HCT116 (cell line): ENCODE measurements at regions of chr7 and their contacts with region 1.

Region 1: GRCh38 chr7:123154231-123154860 is 45.4 kb downstream of the SLC13A1 start:
- DNase-seq: peak; percentile 90
- ATAC-seq: peak; percentile 99
- H3K4me3 ChIP-seq: no peak overlapping the region
- H3K27ac ChIP-seq: no peak overlapping the region
- H3K4me1 ChIP-seq: no peaks in the 10 kb centered on the region
- H3K27me3 ChIP-seq: no peaks in the 10 kb centered on the region
- CTCF ChIP-seq: peak; percentile 58 to 85 (median 73); a peak in 5 of 6 replicates
- POLR2A ChIP-seq: no peak
- RAD21 ChIP-seq: peak; percentile 86

Region 2: DNA sequence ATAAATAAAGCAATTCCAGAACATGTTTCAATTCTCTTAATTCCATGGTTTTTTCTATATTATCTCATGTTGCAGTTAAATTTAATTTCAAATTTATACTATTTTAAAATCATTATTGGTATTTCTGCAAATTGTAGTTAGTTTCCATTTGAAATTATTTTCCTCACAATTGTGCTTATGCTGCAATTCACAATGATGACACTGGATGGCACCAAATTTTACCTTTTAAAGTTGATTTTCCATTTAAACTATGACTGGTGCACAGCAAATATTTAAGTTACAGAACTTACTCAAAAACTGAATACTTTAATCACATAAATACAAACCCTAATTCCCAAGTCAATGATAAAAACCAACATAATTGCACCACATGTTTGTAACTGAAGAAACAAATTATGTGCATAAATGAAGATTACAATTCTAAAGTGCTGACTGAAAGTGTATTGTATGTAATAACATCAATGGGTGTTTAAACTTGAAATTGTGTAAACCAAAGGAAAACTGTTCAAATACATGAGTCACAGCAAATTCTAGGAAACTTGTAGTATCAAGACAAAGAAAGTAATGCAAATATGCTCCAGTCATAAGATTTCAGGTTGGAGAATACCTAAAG is 935.0 kb before region 1 on chr7:
- CTCF ChIA-PET with region 1: no interaction called
- POLR2A ChIA-PET with region 1: no interaction called
- RAD21 ChIA-PET with region 1: no interaction called
- intact Hi-C with region 1: loop called (anchors 5 kb)
- DNase-seq: peak; percentile 10
- ATAC-seq: no peak
- H3K4me3 ChIP-seq: no peak overlapping the region
- H3K27ac ChIP-seq: no peak overlapping the region
- H3K4me1 ChIP-seq: no peaks in the 10 kb centered on the region
- H3K27me3 ChIP-seq: no peaks in the 10 kb centered on the region
- CTCF ChIP-seq: peak; percentile 56 to 78 (median 72)
- POLR2A ChIP-seq: no peak
- RAD21 ChIP-seq: peak; percentile 82

Region 3: GRCh38 chr7:122803323-122803722 is 351.0 kb before region 1 on chr7:
- CTCF ChIA-PET with region 1: interaction called, 10 read pairs
- POLR2A ChIA-PET with region 1: no interaction called
- RAD21 ChIA-PET with region 1: no interaction called
- intact Hi-C with region 1: loop called (anchors 2 kb)
- DNase-seq: peak; percentile 10
- ATAC-seq: peak; percentile 59
- H3K4me3 ChIP-seq: no peak overlapping the region
- H3K27ac ChIP-seq: no peak overlapping the region
- H3K4me1 ChIP-seq: no peaks in the 10 kb centered on the region; a peak in 1 of 4 replicates
- H3K27me3 ChIP-seq: no peaks in the 10 kb centered on the region
- CTCF ChIP-seq: peak; percentile 42 to 59 (median 47); a peak in 4 of 6 replicates
- POLR2A ChIP-seq: no peak
- RAD21 ChIP-seq: peak; percentile 62

Region 4: DNA sequence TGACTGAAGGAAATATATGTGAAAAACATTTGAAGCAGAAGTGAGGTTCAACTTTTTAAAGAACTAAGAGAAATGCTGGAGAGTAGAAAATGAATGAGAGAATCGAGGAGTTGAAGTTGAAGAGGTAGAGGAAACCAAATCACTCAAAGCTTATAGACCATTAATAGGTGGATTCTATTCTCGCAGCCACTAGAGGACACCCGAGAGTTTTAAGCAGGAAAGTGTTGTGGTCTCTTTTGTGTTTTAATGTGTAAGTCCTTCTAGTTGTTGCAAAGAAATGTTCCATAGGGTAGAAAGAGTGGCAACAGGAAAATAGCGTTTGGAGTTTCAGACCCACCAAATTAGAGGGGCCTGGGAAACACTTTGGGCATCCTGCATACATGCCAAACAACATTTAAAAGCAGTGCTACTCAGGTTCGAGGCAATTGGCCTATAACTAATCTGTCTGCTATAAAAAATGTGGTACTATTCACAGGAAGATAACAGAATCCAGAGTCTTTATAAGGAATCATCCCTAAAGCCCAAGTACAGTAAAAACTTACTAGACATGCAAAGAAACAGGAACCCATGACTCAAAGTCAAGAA is 83.6 kb before region 1 on chr7:
- CTCF ChIA-PET with region 1: interaction called, 4 read pairs
- POLR2A ChIA-PET with region 1: no interaction called
- RAD21 ChIA-PET with region 1: interaction called in 1 of 2 experiments, 3 read pairs
- intact Hi-C with region 1: loop called (anchors 5 kb)
- DNase-seq: peak; percentile 32
- ATAC-seq: peak; percentile 80
- H3K4me3 ChIP-seq: no peak overlapping the region
- H3K27ac ChIP-seq: no peak overlapping the region
- H3K4me1 ChIP-seq: no peaks in the 10 kb centered on the region
- H3K27me3 ChIP-seq: no peaks in the 10 kb centered on the region
- CTCF ChIP-seq: peak; percentile 46 to 75 (median 69); a peak in 5 of 6 replicates
- POLR2A ChIP-seq: no peak
- RAD21 ChIP-seq: peak; percentile 72

Region 5: DNA sequence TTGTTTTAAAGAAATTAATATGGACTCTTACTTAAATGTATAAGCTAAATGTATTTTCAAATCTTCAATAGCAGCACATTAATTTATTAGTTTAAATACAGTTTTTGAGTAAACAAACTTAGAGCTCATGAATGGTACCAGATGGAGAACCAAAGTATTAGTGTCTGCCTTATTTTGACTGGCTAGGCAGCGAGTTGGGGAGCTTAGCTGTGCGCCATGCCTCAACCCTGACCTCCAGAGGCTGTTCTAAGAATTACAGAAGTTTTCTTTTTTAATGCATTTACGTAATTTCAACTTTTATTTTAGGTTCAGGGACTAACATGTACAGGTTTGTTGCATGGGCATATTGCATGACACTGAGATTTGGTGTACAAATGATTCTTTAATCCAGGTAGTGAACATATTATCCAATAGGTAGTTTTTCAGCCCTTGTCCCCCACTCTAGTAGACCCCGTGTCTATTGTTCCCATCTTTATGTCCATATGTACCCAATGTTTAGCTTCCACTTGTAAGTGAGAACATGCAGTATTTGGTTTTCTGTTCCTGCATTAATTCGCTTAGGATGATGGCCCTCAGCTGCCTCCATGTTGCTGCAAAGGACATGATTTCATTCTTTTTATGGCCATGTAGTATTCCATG is 213.3 kb after region 1 on chr7:
- CTCF ChIA-PET with region 1: interaction called, 12 read pairs
- POLR2A ChIA-PET with region 1: no interaction called
- RAD21 ChIA-PET with region 1: no interaction called
- intact Hi-C with region 1: loop called (anchors 1 kb)
- DNase-seq: peak; percentile 45
- ATAC-seq: peak; percentile 96
- H3K4me3 ChIP-seq: no peak overlapping the region
- H3K27ac ChIP-seq: no peak overlapping the region
- H3K4me1 ChIP-seq: no peaks in the 10 kb centered on the region
- H3K27me3 ChIP-seq: no peaks in the 10 kb centered on the region
- CTCF ChIP-seq: peak; percentile 67 to 76 (median 72); a peak in 5 of 6 replicates
- POLR2A ChIP-seq: no peak
- RAD21 ChIP-seq: peak; percentile 84